SK-N-SH (cell line): ENCODE measurements at regions of chr4 and their contacts with region 1.

Region 1: DNA sequence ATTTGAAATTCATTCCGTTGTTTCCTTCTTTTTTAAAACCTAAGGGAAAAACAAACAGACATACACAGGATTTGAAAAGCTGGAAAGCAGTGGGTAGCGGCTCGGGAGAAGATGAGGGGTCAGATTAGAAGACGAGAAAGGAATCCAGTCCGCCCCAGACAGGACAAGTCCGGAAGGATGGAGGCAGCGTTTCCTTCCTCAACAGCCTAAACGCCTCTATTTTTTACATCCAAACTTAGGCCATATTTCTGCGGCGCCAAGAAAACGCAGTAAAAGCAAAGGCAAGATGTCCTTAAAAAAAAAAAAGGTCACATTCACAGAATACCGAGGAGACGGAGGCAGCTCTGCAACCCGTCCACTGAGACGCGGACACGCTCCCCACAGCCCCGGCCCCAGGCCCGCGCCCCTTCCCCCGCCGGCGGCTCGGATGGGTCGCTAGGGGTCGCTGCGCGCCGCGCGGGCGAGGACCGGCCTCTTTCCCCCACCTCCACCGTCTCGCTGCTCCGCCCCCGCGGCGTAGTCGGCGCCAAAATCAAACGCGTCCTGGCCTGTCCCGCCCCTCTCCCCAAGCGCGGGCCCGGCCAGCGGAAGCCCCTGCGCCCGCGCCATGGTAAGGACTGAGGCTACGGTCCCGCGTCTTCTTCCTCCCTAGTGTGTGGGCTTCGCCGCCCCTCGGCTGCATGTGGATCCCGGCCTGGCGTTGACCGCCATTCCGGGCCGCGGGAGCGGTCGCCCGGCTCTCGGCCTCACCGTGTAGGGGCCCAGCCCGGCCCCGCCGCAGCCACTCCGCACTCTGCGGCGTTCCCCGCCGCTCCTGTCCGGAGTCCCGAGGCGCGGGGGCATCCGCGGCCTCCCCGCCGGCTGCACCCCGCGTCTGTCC is at the start of gene MND1:
- DNase-seq: peak; percentile 96
- H3K4me3 ChIP-seq: peak within 1 kb of the TSS; percentile 87 to 90
- H3K27ac ChIP-seq: peak within 1 kb of the TSS; percentile 51 to 71
- H3K4me1 ChIP-seq: peaks cover 8 to 9% of the 10 kb centered on the region in 2 experiments
- H3K27me3 ChIP-seq: no peaks in the 10 kb centered on the region
- CTCF ChIP-seq: peak; percentile 95
- EP300 ChIP-seq: no peak
- RAD21 ChIP-seq: peak; percentile 86
- polyA plus RNA-seq, gene MND1: 1.3 and 2.4 TPM in 2 replicates

Region 2: DNA sequence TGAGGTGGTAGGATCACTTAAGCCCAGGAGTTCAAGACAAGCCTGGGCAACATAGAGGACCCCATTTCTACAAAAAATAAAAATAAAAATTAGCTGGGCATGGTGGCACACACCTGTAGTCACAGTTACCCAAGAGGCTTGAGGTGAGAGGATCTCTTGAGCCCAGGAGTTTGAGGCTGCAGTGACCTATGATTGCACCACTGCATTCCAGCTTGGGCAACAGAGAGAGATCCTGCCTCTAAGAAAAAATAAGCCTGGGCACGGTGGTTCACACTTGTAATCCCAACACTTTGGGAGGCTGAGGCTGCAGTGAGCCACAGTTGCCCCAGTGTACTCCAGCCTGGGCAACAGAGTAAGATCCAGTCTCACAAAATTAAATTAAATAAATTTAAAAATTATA is 222.4 kb before region 1 on chr4:
- CTCF ChIA-PET with region 1: no interaction called
- POLR2A ChIA-PET with region 1: no interaction called
- DNase-seq: no peak
- H3K4me3 ChIP-seq: no peak overlapping the region
- H3K27ac ChIP-seq: no peak overlapping the region
- H3K4me1 ChIP-seq: peaks cover 0 to 2% of the 10 kb centered on the region in 2 experiments; a peak in 1 of 4 replicates
- H3K27me3 ChIP-seq: no peaks in the 10 kb centered on the region
- CTCF ChIP-seq: no peak
- EP300 ChIP-seq: no peak
- RAD21 ChIP-seq: no peak

Region 3: DNA sequence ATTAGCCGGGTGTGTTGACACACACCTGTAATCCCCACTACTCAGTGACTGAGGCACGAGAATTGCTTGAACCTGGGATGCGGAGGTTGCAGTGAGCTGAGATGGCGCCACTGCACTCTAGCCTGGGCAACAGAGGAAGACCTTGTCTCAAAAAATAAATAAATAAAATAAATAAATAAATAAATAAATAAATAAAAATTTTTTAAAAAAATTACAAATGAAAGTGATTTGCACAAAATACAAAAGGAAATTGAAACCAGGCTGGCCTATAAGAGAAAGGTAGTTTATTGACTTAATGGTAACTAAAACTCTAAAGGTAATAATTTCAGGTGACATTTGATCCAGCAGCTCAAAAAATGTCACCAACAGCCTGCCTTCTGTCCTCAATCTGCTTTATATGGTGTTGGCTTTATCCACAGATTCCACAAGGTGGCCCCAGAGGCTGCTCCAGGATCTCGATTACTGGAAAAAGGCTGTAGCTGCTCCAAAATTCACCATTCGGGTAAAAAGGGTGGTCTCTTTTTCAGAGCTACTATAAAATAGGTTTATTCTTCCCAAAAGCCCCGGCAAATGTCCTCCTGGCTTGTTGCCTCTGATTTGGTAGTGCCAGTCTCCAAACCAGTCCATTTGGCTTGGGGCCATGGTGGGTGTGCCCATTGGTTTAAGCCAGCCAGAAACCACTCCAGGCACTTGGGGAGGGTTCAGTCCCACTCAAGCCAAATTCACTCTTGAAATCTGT is 201.5 kb before region 1 on chr4:
- CTCF ChIA-PET with region 1: interaction called, 31 read pairs
- POLR2A ChIA-PET with region 1: no interaction called
- DNase-seq: peak; percentile 72
- H3K4me3 ChIP-seq: peak overlapping the region; percentile 21 to 55; a peak in 3 of 4 replicates
- H3K27ac ChIP-seq: peak overlapping the region; percentile 66 to 98
- H3K4me1 ChIP-seq: peaks cover 20 to 36% of the 10 kb centered on the region in 2 experiments; a peak in 3 of 4 replicates
- H3K27me3 ChIP-seq: no peaks in the 10 kb centered on the region
- CTCF ChIP-seq: peak; percentile 98
- EP300 ChIP-seq: no peak
- RAD21 ChIP-seq: peak; percentile 97

Region 4: GRCh38 chr4:153166716-153167501 is 177.5 kb before region 1 on chr4:
- CTCF ChIA-PET with region 1: no interaction called
- POLR2A ChIA-PET with region 1: no interaction called
- DNase-seq: no peak
- H3K4me3 ChIP-seq: no peak overlapping the region
- H3K27ac ChIP-seq: no peak overlapping the region
- H3K4me1 ChIP-seq: 0 out of 4 replicates have a peak, but pooled peaks cover 0 to under 1% of the 10 kb centered on the region in 2 experiments
- H3K27me3 ChIP-seq: no peaks in the 10 kb centered on the region
- CTCF ChIP-seq: no peak
- EP300 ChIP-seq: no peak
- RAD21 ChIP-seq: no peak

Region 5: GRCh38 chr4:153466081-153466948 is 121.9 kb after region 1 on chr4 and contains the start of gene TMEM131L:
- CTCF ChIA-PET with region 1: interaction called, 18 read pairs
- POLR2A ChIA-PET with region 1: interaction called, 5 read pairs
- DNase-seq: peak; percentile 95
- H3K4me3 ChIP-seq: peak within 1 kb of the TSS; percentile 82 to 88
- H3K27ac ChIP-seq: peak within 1 kb of the TSS; percentile 42 to 90; a peak in 3 of 4 replicates
- H3K4me1 ChIP-seq: peaks cover 26 to 31% of the 10 kb centered on the region in 2 experiments
- H3K27me3 ChIP-seq: no peaks in the 10 kb centered on the region
- CTCF ChIP-seq: peak; percentile 8; the same call in 1 of the 2 replicates
- EP300 ChIP-seq: no peak
- RAD21 ChIP-seq: no peak; the same call in 1 of the 2 replicates
- polyA plus RNA-seq, gene TMEM131L: 6.2 and 6.8 TPM in 2 replicates

Region 6: GRCh38 chr4:153549401-153549800 is 205.0 kb after region 1 on chr4:
- CTCF ChIA-PET with region 1: interaction called, 10 read pairs
- POLR2A ChIA-PET with region 1: no interaction called
- DNase-seq: no peak
- H3K4me3 ChIP-seq: no peak overlapping the region
- H3K27ac ChIP-seq: peak overlapping the region in 1 of 2 experiments; percentile 6; a peak in 1 of 4 replicates
- H3K4me1 ChIP-seq: peaks cover 0 to 10% of the 10 kb centered on the region in 2 experiments; a peak in 3 of 4 replicates
- H3K27me3 ChIP-seq: no peaks in the 10 kb centered on the region
- CTCF ChIP-seq: no peak
- EP300 ChIP-seq: no peak
- RAD21 ChIP-seq: no peak

Region 7: DNA sequence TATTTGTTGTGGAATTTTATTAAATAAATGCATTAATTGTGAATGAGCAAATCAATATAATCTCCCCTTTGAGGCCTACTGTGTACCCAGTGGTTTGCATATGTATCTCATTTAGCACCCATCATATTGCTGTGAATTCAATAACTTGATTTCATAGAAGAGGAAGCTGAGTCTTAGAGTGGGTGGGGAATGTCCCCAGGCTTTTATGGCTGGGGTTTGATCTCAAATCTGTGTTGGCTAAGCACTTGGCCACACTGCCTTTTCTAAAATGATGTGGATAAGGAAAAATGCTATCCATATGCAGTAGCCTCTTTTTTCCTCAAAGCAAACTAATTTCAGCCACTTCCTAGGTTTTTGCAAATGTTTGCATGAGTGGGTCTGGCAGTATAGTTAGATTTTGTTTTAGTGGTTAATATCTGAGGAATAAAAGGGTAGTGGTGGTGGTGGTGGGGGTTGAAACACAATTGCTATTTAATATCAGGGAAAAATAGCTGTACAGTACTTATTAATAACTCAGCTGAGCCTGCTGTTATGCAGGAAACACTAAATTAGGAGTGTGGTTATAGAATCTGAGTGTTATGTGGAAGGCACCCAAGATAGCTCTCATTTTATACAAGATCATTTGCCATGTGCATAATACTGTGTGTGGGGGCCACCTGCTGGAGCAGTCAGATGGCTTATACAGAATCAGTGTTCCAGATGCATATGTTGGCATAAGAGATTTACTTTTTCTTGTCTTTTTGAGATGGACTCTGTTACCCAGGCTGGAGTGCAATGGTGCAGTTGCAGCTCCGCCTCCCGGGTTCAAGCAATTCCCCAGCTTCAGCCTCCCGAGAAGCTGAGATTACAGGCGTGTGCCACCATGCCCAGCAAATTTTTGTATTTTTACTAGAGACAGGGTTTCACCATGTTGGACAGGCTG is 229.8 kb after region 1 on chr4:
- CTCF ChIA-PET with region 1: interaction called, 67 read pairs
- POLR2A ChIA-PET with region 1: interaction called, 3 read pairs
- DNase-seq: peak; percentile 58
- H3K4me3 ChIP-seq: no peak overlapping the region
- H3K27ac ChIP-seq: no peak overlapping the region; a peak in 1 of 4 replicates
- H3K4me1 ChIP-seq: peaks cover 0 to 9% of the 10 kb centered on the region in 2 experiments; a peak in 3 of 4 replicates
- H3K27me3 ChIP-seq: no peaks in the 10 kb centered on the region
- CTCF ChIP-seq: peak; percentile 82
- EP300 ChIP-seq: no peak
- RAD21 ChIP-seq: peak; percentile 93

Region 8: GRCh38 chr4:153643406-153644383 is 299.3 kb after region 1 on chr4:
- CTCF ChIA-PET with region 1: interaction called, 25 read pairs
- POLR2A ChIA-PET with region 1: no interaction called
- DNase-seq: peak; percentile 69
- H3K4me3 ChIP-seq: no peak overlapping the region
- H3K27ac ChIP-seq: no peak overlapping the region
- H3K4me1 ChIP-seq: no peaks in the 10 kb centered on the region; a peak in 1 of 4 replicates
- H3K27me3 ChIP-seq: no peaks in the 10 kb centered on the region
- CTCF ChIP-seq: peak; percentile 67
- EP300 ChIP-seq: no peak
- RAD21 ChIP-seq: peak; percentile 75